Left cardiac atrium (tissue), 4 donors: ENCODE measurements at regions of chr2 and their contacts with region 1.

Region 1: DNA sequence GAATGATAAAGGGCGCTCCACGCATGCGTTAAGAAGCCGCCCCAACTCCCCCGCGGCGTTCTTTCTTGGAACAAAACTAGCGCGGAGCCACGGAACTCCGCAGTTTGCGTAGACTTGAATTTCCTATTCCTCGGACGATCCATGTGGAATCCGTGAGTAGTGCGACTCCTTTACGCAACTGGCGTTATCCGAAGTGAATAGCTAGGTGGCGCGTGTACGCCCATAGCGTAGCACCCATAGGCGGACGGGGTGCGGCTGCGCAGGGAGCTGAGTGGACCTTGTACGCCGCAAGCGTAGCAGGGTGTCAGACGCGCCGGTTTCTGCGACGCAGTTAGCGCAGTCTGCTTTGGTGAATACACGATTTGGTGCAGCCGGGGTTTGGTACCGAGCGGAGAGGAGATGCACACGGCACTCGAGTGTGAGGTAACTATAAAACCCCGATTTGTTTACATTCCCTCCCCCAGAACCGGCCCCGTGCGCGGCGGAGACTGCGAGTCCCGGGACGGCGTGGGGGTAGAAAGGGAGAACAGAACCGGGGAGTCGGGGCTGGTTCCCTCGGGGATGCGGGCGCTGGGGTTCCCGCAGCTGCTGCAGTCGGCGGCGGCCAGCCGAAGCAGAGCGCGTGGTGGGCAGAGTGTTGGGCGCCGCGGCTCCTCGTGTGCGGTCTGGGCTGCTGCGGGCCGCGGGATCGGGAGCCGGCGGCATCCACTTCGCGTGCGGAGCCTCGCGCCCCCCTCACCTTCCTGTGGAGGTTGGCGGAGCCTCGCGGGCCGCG is at the start of gene SLC39A10:
- DNase-seq: peak; percentile 97
- ATAC-seq: peak; percentile 89 to 90
- total RNA-seq, gene SLC39A10: 13.7 to 13.8 TPM

Region 2: GRCh38 chr2:195498176-195498575 is 158.9 kb before region 1 on chr2:
- intact Hi-C with region 1: loop called in 1 of 2 experiments (anchors 10 kb)
- DNase-seq: peak; percentile 30
- ATAC-seq: peak in 1 of 2 donors; percentile 42

Region 3: GRCh38 chr2:195575879-195576401 is 81.1 kb before region 1 on chr2:
- intact Hi-C with region 1: loop called (anchors 5 to 10 kb)
- DNase-seq: no peak
- ATAC-seq: peak; percentile 59 to 67

Region 4: DNA sequence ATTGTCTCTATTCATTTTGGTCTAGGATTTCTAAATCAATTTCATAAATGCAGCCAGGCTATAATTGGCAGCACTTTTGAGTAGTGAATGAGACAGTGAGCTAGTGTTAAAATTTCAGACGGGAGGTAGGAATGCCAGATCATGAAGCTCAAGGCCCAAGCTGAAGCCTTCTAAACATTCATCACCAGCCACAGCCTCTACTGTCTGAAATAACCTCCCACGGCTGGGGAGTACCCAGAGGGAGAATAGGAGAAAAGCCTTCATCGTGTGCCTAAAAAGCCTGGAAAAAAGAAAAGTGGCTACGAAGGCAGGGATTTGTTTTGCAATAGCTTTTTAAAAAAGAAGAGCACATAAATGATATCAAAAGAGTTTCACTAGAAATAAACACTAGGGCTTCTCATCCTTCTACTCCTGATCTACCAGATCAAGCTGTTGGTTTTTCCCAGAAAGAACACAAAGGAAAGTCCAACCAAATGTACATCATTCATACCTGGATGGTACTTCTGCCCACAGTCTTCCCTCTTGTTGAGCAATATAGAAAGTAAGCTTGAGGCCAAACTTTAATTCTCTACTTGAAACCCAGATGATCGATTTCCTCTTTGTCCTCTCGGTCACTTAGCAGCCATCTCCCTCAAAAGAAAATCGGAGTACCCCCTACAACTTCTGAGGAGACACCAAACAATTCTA is 48.1 kb before region 1 on chr2:
- intact Hi-C with region 1: loop called in 1 of 2 experiments (anchors 5 kb)
- DNase-seq: no peak
- ATAC-seq: peak in 1 of 2 donors; percentile 48

Region 5: GRCh38 chr2:195961873-195962272 is 304.8 kb after region 1 on chr2:
- intact Hi-C with region 1: no loop called
- DNase-seq: no peak
- ATAC-seq: no peak